ENCODE measurements at regions of chr1 and their contacts with region 1.

Region 1: GRCh38 chr1:187744665-187745064 is 915.9 kb downstream of the PLA2G4A start:
- DNase-seq: no peak
- ATAC-seq: no peak
- H3K4me3 ChIP-seq: no peak overlapping the region
- H3K27ac ChIP-seq: no peak overlapping the region
- H3K4me1 ChIP-seq: no peaks in the 10 kb centered on the region
- H3K27me3 ChIP-seq: no peaks in the 10 kb centered on the region
- CTCF ChIP-seq: no peak
- POLR2A ChIP-seq: no peak
- RAD21 ChIP-seq: no peak

Region 2: DNA sequence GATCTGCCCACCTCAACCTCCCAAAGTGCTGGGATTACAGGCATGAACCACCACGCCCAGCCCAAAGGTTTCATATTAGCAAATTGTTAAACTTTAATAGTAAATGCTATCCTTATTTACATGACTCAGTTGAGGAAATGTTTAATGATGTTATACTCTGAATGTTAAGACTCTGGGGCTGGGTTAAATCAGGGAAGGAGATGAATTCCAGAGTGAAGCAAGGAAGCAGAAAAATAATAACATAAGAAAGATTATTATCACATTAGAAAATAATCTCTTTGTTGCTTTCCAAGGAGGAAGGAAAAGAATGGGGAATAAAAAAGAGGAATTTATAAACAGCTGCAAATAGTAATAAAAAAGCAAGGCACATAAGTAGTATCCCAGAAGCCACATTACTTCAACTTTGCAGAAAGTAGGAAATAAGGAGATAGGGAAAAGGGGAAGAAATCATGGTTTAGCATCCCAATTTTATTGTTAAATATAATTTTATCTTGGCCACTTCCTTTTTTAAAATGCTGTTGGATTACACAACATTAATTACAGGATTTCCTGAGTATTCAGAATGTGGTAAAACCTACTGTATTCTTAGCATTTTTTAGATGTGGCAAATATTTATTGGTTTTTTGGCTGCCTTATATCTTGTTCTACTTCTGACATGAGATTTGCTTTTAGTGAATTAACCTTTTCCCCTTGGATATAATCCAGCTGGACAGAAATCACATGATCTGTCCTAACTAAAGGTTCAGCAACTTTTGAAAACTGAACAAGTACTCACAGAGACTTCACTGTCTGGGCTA is 1169.5 kb before region 1 on chr1:
- CTCF ChIA-PET with region 1: no interaction called
- POLR2A ChIA-PET with region 1: no interaction called
- RAD21 ChIA-PET with region 1: no interaction called
- intact Hi-C with region 1: no loop called
- DNase-seq: no peak
- ATAC-seq: no peak
- H3K4me3 ChIP-seq: no peak overlapping the region
- H3K27ac ChIP-seq: no peak overlapping the region
- H3K4me1 ChIP-seq: no peaks in the 10 kb centered on the region
- H3K27me3 ChIP-seq: no peaks in the 10 kb centered on the region
- CTCF ChIP-seq: no peak
- POLR2A ChIP-seq: no peak
- RAD21 ChIP-seq: no peak

Region 3: DNA sequence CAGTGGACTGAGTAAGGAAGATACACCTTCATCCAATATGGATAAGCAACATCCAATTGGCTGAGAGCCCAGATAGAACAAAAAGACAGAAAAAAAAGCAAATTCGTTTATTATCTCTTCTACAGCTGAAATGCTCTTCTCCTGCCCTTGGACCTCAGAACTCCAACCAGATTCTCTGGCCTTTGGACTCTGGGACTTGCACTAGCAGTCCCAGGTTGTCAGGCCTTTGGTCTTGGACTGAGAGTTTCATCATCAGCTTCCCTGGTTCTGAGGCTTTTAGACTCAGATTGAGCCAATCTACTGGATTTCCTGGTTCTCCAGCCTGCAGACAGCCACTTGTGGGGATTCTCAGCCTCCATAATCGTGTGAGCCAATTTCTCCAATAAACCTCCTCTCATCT is 10.9 kb after region 1 on chr1:
- CTCF ChIA-PET with region 1: no interaction called
- POLR2A ChIA-PET with region 1: no interaction called
- RAD21 ChIA-PET with region 1: no interaction called
- intact Hi-C with region 1: loop called (anchors 1 kb)
- DNase-seq: no peak
- ATAC-seq: no peak
- H3K4me3 ChIP-seq: no peak overlapping the region
- H3K27ac ChIP-seq: no peak overlapping the region
- H3K4me1 ChIP-seq: no peaks in the 10 kb centered on the region
- H3K27me3 ChIP-seq: no peaks in the 10 kb centered on the region
- CTCF ChIP-seq: no peak
- POLR2A ChIP-seq: no peak
- RAD21 ChIP-seq: no peak

Measured in HCT116 (cell line).